GM10248 (cell line): ENCODE measurements at regions of chr4 and their contacts with region 1.

Region 1: GRCh38 chr4:163959932-163960331 is 465.4 kb downstream of the TMA16 start:
- DNase-seq: no peak
- CTCF ChIP-seq: no peak

Region 2: DNA sequence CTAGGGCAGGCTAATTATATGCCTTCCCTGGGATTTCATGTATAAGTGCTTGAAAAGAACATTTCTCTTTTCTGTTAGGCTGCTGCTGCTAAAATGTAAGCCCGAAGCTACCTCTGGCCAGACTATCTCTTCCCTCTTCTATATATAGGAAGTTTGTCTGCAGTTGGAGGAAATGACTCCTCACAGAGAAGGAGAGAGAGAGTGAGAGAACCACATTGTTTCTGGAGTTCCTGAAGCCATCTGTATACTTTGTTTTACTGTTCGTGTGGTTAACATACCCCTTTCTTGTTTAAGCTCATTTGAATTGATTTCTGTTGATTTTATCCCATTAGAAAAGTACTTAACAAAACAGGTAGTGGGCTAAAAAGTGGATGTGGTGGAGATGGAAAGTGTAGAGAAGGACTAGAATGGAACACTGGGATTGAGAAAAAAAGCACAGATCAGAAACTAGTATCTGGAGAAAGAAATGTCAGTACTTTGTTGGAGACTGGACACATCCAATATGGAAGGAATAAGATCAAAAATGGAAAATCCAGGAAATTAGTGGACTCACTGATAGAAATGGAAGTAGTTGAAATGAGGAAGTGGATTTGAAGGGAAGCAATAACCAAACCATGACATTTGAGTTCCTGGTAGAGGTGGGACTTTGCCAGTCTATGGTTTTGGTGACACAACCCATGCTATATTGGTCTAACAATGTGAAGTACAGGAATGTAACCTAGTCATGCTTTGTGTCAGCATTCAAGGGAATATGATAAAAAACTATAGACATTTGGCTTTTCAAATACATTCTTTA is 352.8 kb before region 1 on chr4:
- CTCF ChIA-PET with region 1: no interaction called
- POLR2A ChIA-PET with region 1: no interaction called
- DNase-seq: no peak
- CTCF ChIP-seq: no peak

Region 3: DNA sequence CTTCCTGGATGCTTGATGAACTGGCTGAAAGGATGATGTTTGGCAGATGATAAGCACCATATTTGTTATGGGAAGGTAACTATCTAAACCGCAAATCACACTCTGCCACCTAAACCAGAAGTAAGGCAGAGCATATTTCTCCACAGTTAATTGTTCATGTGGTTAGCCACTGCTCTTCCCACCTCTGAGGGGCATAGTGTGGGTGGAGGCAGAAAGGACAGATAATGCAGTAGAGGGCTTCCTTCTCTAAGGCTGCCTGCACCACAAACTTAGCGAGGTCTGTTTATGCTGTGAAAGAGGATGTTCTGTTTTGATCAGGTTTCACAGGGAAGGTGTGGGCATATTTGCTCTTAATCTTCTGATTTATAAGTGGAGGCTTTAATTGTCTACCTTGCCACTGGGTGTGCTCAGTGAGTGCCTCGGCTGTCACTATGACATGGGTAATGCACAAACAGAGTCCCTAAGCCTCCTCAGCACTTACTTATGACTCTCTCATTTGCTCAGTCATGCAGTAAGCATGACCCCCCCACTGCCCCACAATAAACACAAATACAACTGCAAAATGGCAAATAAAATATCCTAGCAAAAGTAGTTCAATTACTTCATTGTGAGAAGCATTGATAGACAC is 64.4 kb before region 1 on chr4:
- CTCF ChIA-PET with region 1: no interaction called
- POLR2A ChIA-PET with region 1: no interaction called
- DNase-seq: no peak
- CTCF ChIP-seq: no peak

Region 4: GRCh38 chr4:163932504-163932903 is 27.4 kb before region 1 on chr4:
- CTCF ChIA-PET with region 1: no interaction called
- POLR2A ChIA-PET with region 1: no interaction called
- DNase-seq: no peak
- CTCF ChIP-seq: no peak

Region 5: GRCh38 chr4:163948920-163949455 is 10.9 kb before region 1 on chr4:
- CTCF ChIA-PET with region 1: interaction called, 17 read pairs
- POLR2A ChIA-PET with region 1: no interaction called
- DNase-seq: no peak
- CTCF ChIP-seq: no peak